IMR-90 (cell line): ENCODE measurements at regions of chr4 and their contacts with region 1.

Region 1: GRCh38 chr4:86416081-86416480 is 56.2 kb upstream of the MAPK10 start:
- DNase-seq: peak; percentile 15
- ATAC-seq: no peak
- H3K4me3 ChIP-seq: no peak overlapping the region
- H3K27ac ChIP-seq: no peak overlapping the region
- H3K4me1 ChIP-seq: no peaks in the 10 kb centered on the region
- H3K27me3 ChIP-seq: no peaks in the 10 kb centered on the region
- CTCF ChIP-seq: no peak
- POLR2A ChIP-seq: no peak
- RAD21 ChIP-seq: no peak

Region 2: GRCh38 chr4:87732033-87732765 is 1316.1 kb after region 1 on chr4:
- CTCF ChIA-PET with region 1: no interaction called
- POLR2A ChIA-PET with region 1: no interaction called
- dilution Hi-C with region 1: no loop called
- in situ Hi-C with region 1: no loop called
- intact Hi-C with region 1: loop called (anchors 10 kb)
- DNase-seq: no peak
- ATAC-seq: no peak
- H3K4me3 ChIP-seq: no peak overlapping the region
- H3K27ac ChIP-seq: no peak overlapping the region
- H3K4me1 ChIP-seq: no peaks in the 10 kb centered on the region
- H3K27me3 ChIP-seq: no peaks in the 10 kb centered on the region
- CTCF ChIP-seq: no peak
- POLR2A ChIP-seq: no peak
- RAD21 ChIP-seq: no peak